ENCODE measurements at regions of chr2 and their contacts with region 1.

Region 1: DNA sequence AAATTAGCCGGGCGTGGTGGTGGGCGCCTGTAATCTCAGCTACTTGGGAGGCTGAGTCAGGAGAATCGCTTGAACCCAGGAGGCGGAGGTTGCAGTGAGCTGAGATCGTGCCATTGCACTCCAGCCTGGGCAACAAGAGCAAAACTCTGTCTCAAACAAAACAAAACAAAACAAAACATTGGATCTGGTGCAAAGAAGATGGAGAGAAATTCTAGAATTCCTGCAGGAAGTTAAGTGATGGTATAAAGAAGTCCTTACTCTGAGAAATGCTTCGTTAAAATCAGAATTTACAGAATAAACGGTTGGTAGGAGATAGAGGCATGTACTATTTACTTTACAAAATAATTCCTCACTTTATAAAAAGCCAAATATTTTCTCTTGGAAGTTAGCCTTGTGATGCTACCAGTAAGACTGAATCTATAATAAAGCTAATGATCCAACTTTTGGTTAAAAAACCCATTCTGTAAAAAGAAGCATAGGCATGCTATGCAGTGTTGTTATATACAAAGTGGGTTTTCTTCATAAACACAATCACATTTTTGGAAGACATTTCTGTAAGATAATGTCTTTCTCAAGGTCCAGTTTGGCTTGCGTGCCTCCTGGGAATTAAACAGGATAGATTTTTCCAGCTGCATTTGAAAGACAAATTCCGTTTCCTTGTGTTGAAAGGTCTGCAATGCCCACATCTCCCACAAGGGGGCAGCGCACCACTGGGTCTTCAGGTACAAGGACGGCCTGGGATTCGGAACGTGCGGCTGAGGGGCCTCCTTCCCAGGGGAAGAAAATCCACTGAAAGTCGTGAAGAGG is 35.6 kb upstream of the PNO1 start:
- DNase-seq: peak; percentile 87 to 93 (median 91)
- H3K4me3 ChIP-seq: peak overlapping the region; percentile 0 to 26 (median 13)
- H3K27ac ChIP-seq: no peak overlapping the region
- H3K4me1 ChIP-seq: no peaks in the 10 kb centered on the region
- H3K27me3 ChIP-seq: no peaks in the 10 kb centered on the region
- CTCF ChIP-seq: peak; percentile 98

Region 2: GRCh38 chr2:67828066-67828465 is 294.0 kb before region 1 on chr2:
- intact Hi-C with region 1: no loop called
- DNase-seq: no peak
- H3K4me3 ChIP-seq: no peak overlapping the region
- H3K27ac ChIP-seq: no peak overlapping the region
- H3K4me1 ChIP-seq: no peaks in the 10 kb centered on the region
- H3K27me3 ChIP-seq: no peaks in the 10 kb centered on the region
- CTCF ChIP-seq: no peak

Region 3: GRCh38 chr2:68272246-68272994 is 150.3 kb after region 1 on chr2:
- intact Hi-C with region 1: loop called (anchors 10 kb)
- DNase-seq: peak in 1 of 5 donors; percentile 19
- H3K4me3 ChIP-seq: no peak overlapping the region
- H3K27ac ChIP-seq: no peak overlapping the region
- H3K4me1 ChIP-seq: no peaks in the 10 kb centered on the region
- H3K27me3 ChIP-seq: no peaks in the 10 kb centered on the region
- CTCF ChIP-seq: no peak